Ovary (tissue), 10 donors: ENCODE measurements at regions of chr4 and their contacts with region 1.

Region 1: DNA sequence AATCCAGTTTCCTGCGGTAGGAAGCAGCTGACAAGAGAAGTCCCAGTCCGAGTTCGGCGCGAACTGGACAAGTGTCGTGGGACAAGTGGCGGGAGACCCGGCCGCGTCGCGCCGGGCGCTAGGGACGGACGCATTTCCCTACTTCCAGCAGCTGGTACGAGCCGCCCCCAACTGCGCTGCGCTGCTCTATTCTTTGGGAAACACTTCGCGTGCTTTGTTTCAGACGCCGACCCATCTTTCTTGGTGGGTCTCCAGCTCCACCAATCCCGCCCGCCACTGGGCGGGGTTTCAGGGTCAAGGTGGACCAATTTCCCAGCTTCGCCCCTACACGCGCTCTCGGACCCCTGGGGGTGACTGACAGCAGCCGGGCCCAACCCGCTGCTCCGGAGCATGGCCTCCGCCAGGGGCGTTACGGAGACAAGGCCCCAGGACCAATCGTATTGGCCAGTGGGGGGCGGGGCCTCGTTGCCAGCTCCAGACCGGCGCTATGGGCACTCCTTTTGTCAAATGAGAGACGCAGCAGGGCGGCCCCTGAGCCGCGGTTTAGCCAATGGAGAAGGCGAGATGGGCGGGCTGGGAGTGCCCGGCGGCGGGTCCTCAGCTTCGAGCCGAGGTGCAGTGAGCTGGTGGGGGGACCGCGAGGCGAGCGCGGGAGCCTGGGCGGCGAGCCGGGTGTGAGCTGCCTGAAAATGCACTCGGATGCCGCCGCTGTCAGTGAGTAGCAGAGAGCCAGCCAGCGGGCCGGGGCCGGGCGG is at the start of gene DCUN1D4:
- DNase-seq: peak; percentile 100
- H3K4me3 ChIP-seq: peak within 1 kb of the TSS; percentile 91
- H3K27ac ChIP-seq: peak within 1 kb of the TSS; percentile 87 to 96
- H3K4me1 ChIP-seq: peaks cover 4% of the 10 kb centered on the region
- H3K27me3 ChIP-seq: no peaks in the 10 kb centered on the region
- CTCF ChIP-seq: peak; percentile 34 to 76 (median 49)
- EP300 ChIP-seq: no peak
- POLR2A ChIP-seq: peak; percentile 83
- total RNA-seq, gene DCUN1D4: 54.0 to 102 (median 73.4) TPM

Region 2: DNA sequence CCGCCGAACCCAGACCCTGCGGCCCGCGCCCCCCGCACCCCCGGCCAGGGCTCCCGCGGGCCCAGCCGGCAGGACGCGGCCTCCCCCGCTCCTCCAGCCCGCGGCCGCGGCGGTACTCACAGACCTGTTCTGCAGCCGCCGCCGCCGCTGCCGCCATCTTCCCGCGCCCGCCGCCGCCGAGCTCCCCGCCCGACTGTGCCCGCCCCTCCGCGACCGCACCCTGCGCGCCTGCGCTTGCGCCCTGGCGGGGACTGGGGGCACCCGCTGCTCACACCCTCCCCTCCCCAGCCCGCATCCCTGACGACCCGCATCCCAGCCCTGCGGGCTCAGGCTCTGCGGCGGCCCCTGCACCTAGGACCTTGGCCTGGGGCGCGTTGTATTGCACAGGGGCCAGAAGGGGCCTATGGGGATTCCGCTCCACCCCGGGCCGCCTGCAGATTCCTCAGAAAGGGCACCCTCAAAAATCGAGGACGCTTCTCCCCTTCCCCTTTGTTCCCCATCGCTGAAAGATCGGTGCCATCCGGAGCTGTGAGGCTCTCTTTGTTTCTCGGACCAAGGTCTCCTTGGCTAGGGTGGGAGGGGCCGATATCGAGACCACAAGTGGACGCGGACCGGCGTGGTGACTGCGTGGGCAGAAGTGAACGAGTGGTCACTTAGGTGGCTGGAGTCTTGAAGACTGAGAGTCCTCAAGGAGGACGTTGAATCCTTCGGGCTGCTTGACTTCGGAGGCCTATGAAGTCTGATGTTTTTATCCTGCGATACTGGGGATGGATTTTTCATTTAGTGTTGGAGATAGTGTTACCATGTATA is 195.6 kb after region 1 on chr4 and contains the start of gene SGCB:
- intact Hi-C with region 1: loop called in 1 of 4 experiments (anchors 10 kb)
- DNase-seq: peak; percentile 65 to 80 (median 73)
- H3K4me3 ChIP-seq: peak within 1 kb of the TSS; percentile 76
- H3K27ac ChIP-seq: peak within 1 kb of the TSS; percentile 76 to 77
- H3K4me1 ChIP-seq: peaks cover 9% of the 10 kb centered on the region
- H3K27me3 ChIP-seq: no peaks in the 10 kb centered on the region
- CTCF ChIP-seq: no peak
- EP300 ChIP-seq: no peak
- POLR2A ChIP-seq: no peak
- total RNA-seq, gene SGCB: 21.3 to 47.5 (median 32.7) TPM

Region 3: GRCh38 chr4:52431410-52431809 is 588.7 kb after region 1 on chr4:
- intact Hi-C with region 1: no loop called
- DNase-seq: no peak
- H3K4me3 ChIP-seq: no peak overlapping the region
- H3K27ac ChIP-seq: no peak overlapping the region
- H3K4me1 ChIP-seq: no peaks in the 10 kb centered on the region
- H3K27me3 ChIP-seq: no peaks in the 10 kb centered on the region
- CTCF ChIP-seq: no peak
- EP300 ChIP-seq: no peak
- POLR2A ChIP-seq: no peak

Region 4: DNA sequence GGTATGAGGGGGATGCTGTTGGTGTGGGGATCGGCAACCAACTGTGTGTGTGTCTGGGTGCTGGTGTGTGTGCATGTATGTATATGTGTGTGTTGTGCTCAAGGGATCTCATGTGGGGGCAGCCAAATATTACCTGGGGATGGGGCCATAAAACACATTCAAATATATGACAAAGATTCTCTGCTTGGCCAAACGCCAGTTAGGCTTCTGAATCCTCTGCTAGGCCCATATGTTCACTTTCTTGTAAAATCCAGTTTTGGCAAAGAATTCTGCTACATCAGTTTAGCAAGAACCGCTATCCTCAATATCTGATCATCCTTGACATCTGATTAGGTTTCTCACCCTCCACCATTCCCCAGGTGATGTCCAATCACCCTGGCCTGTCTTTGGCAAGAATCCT is 1126.0 kb after region 1 on chr4:
- intact Hi-C with region 1: loop called in 1 of 4 experiments (anchors 5 kb)
- DNase-seq: no peak
- H3K4me3 ChIP-seq: no peak overlapping the region
- H3K27ac ChIP-seq: no peak overlapping the region
- H3K4me1 ChIP-seq: peaks cover 2% of the 10 kb centered on the region
- H3K27me3 ChIP-seq: no peaks in the 10 kb centered on the region
- CTCF ChIP-seq: no peak
- EP300 ChIP-seq: no peak
- POLR2A ChIP-seq: no peak